MCF 10A (cell line): ENCODE measurements at regions of chr5 and their contacts with region 1.

Region 1: DNA sequence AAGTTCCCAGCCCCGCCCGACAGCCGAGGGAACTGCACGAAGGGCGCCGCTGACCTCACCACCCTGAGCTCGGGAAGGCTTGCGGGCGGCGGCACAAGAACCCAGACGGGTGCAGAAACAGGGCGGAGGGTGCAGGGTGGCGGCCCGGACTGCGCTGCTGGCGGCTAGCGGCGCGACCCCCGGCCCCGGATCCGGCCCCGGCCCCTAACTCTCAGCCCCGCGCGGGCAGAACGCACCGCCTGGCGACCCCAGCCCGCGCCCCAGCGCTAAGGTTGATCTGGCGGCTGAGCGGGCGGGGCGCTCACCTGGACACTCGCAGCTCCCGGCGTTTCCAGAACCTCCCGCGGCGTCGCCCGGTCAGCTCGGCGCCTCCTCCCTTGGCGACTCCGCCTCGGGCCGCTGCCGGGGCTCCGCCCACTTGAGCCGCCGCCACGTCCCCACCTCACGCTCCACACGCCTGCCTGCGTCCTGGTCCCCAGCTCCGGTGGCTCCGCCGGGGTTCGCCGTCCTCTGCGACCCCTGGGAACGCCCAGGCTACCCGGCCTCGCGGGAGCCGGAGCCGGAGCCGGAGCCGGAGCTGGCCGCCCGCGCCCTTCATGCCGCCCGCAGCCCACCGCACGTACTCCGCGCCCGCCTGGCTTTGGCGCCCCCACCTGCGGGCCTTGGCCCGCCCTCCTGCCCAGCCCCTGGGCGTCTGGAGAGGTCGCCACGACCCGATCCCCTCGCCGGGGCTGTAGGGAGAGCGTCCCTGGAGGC is at the start of gene P4HA2:
- DNase-seq: peak; percentile 86
- H3K4me3 Mint-ChIP-seq: peak within 1 kb of the TSS; percentile 74
- H3K27ac Mint-ChIP-seq: no peak within 1 kb of the TSS
- H3K4me1 Mint-ChIP-seq: peaks cover 32% of the 10 kb centered on the region
- H3K27me3 Mint-ChIP-seq: no peaks in the 10 kb centered on the region
- CTCF ChIP-seq: peak; percentile 21
- total RNA-seq, gene P4HA2: 53.1 and 91.1 TPM in 2 replicates

Region 2: DNA sequence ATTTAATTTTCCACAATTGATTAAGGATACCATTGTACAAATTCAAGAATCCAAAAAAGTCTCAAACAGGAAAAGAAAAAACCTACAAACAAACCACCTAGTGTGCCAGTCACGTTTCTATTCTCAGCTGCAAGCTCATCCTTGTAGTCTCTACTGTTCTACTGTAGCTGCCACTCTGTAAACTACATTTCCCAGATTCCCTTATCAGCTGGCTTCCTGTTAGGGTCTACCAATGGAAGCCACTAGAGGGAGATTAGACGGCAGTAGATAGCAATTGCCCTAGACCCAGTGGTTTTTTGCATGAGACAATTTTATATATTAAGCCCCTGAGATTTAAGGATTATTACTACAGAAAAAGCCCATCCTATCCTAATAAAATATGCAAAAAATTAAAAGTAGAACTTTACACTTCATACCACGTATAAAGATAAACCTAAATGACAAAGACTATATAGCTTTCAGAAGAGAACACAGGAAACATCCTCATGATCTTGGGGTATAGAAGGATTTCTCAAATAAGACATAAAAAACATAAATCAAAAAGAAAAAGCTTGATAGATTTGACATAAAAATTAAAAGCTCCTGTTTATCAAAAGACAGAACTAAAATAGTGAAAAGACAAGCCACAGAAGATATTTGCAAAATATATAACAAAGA is 37.4 kb before region 1 on chr5:
- CTCF ChIA-PET with region 1: interaction called, 13 read pairs
- POLR2A ChIA-PET with region 1: interaction called, 6 read pairs
- intact Hi-C with region 1: loop called (anchors 2 kb)
- DNase-seq: peak; percentile 85
- H3K4me3 Mint-ChIP-seq: no peak overlapping the region
- H3K27ac Mint-ChIP-seq: no peak overlapping the region
- H3K4me1 Mint-ChIP-seq: peaks cover 9% of the 10 kb centered on the region
- H3K27me3 Mint-ChIP-seq: no peaks in the 10 kb centered on the region
- CTCF ChIP-seq: peak; percentile 55

Region 3: DNA sequence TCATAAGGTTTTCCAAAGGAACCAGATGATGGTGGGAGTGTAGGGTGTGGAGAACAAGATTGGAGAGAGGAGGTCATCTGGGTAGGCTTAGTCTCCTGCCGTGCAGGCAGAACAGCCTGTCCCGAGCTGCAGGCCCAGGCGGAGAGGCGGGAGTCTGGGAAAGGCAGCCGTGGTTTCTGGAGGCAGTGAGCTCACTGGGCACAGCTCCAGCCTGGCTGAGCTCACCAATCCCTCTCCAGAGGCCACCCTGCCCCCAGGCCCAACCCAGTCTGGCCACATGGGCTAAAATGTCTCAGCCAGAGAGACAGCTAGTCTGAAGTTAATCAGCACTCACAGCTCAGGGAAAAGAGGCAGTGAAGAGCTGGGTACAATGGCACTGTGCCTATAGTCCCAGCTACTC is 12.3 kb before region 1 on chr5:
- CTCF ChIA-PET with region 1: interaction called, 10 read pairs
- POLR2A ChIA-PET with region 1: interaction called, 97 read pairs
- intact Hi-C with region 1: loop called (anchors 1 kb)
- DNase-seq: peak; percentile 99
- H3K4me3 Mint-ChIP-seq: peak overlapping the region; percentile 32
- H3K27ac Mint-ChIP-seq: peak overlapping the region; percentile 80
- H3K4me1 Mint-ChIP-seq: peaks cover 15% of the 10 kb centered on the region
- H3K27me3 Mint-ChIP-seq: no peaks in the 10 kb centered on the region
- CTCF ChIP-seq: no peak

Region 4: DNA sequence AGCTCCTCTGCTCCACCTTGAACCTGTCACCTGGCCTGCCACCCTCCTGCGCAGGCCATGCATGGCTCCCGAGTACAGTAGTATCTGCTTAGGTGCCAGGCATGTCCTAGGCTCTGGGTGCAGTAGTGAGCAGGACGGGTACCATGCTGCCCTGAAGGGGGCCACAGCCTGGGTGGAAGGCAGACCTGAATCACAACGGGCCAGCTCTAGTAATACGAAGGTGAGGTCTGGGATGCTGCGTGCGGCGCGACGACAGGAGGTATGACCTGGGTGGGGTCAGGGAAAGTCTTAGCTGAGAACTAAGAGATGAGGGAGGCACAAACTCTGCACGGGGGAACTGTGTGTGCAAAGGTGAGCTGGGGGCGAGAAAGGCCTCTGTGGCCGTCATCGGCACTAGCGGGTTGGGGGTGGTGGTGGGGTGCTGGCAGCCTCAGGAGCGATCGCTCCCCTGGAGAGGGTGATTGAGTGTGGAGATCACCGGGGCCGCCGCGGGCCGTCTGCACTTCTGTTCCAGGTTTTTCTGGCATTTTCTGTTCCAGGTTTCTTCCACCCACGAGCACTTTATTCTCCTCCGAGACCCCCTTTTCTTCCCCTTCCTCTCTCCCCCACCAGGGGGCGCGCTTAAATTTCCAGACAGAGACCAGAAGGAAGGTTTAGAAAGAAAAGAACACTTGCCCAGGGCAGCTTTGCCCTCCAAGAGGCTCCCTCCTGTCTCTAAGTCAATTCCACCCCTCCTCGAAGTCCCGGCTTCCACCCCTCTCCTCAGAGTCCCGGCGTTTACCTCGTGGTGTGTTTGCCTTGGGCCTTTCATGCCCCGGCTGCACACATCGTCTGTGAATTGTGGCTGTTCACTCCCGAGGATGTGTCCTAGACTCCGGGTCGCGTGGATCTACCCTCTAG is 44.9 kb after region 1 on chr5:
- CTCF ChIA-PET with region 1: interaction called, 12 read pairs
- POLR2A ChIA-PET with region 1: no interaction called
- intact Hi-C with region 1: no loop called
- DNase-seq: peak; percentile 68
- H3K4me3 Mint-ChIP-seq: no peak overlapping the region
- H3K27ac Mint-ChIP-seq: no peak overlapping the region
- H3K4me1 Mint-ChIP-seq: peaks cover 2% of the 10 kb centered on the region
- H3K27me3 Mint-ChIP-seq: no peaks in the 10 kb centered on the region
- CTCF ChIP-seq: peak; percentile 96

Region 5: DNA sequence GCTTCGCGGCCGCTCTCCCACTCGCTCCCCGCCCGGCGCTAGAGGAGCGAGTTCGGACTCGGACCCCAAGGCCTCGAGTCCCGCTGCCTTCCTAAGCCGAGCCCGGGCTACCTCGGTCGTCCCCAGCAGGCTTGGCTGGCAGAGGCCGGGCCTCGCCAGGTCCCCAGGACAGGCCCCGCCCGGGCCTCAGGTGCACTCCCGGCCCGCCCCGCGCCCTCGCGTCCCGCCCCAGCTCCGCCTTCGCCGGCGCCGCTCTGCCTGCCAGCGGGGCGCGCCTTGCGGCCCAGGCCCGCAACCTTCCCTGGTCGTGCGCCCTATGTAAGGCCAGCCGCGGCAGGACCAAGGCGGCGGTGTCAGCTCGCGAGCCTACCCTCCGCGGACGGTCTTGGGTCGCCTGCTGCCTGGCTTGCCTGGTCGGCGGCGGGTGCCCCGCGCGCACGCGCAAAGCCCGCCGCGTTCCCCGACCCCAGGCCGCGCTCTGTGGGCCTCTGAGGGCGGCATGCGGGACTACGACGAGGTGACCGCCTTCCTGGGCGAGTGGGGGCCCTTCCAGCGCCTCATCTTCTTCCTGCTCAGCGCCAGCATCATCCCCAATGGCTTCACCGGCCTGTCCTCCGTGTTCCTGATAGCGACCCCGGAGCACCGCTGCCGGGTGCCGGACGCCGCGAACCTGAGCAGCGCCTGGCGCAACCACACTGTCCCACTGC is 142.0 kb after region 1 on chr5 and contains the start of gene SLC22A5:
- CTCF ChIA-PET with region 1: interaction called, 8 read pairs
- POLR2A ChIA-PET with region 1: interaction called, 10 read pairs
- intact Hi-C with region 1: loop called (anchors 5 kb)
- DNase-seq: peak; percentile 84
- H3K4me3 Mint-ChIP-seq: peak within 1 kb of the TSS; percentile 79
- H3K27ac Mint-ChIP-seq: peak within 1 kb of the TSS; percentile 39
- H3K4me1 Mint-ChIP-seq: peaks cover 44% of the 10 kb centered on the region
- H3K27me3 Mint-ChIP-seq: no peaks in the 10 kb centered on the region
- CTCF ChIP-seq: no peak
- total RNA-seq, gene SLC22A5: 122 and 167 TPM in 2 replicates